ENCODE measurements at regions of chr1 and their contacts with region 1.

Region 1: GRCh38 chr1:86380257-86380861 is 15.8 kb downstream of the ODF2L start:
- DNase-seq: no peak
- H3K4me3 ChIP-seq: no peak overlapping the region
- H3K27ac ChIP-seq: no peak overlapping the region
- H3K4me1 ChIP-seq: peaks cover 0 to 21% (median 0%) of the 10 kb centered on the region in 4 donors
- H3K27me3 ChIP-seq: no peaks in the 10 kb centered on the region
- CTCF ChIP-seq: peak; percentile 62 to 76 (median 72)
- EP300 ChIP-seq: no peak
- POLR2A ChIP-seq: no peak

Region 2: GRCh38 chr1:86352096-86352495 is 28.3 kb before region 1 on chr1:
- intact Hi-C with region 1: no loop called
- DNase-seq: no peak
- H3K4me3 ChIP-seq: no peak overlapping the region
- H3K27ac ChIP-seq: no peak overlapping the region
- H3K4me1 ChIP-seq: no peaks in the 10 kb centered on the region
- H3K27me3 ChIP-seq: no peaks in the 10 kb centered on the region
- CTCF ChIP-seq: no peak
- EP300 ChIP-seq: no peak
- POLR2A ChIP-seq: no peak

Region 3: DNA sequence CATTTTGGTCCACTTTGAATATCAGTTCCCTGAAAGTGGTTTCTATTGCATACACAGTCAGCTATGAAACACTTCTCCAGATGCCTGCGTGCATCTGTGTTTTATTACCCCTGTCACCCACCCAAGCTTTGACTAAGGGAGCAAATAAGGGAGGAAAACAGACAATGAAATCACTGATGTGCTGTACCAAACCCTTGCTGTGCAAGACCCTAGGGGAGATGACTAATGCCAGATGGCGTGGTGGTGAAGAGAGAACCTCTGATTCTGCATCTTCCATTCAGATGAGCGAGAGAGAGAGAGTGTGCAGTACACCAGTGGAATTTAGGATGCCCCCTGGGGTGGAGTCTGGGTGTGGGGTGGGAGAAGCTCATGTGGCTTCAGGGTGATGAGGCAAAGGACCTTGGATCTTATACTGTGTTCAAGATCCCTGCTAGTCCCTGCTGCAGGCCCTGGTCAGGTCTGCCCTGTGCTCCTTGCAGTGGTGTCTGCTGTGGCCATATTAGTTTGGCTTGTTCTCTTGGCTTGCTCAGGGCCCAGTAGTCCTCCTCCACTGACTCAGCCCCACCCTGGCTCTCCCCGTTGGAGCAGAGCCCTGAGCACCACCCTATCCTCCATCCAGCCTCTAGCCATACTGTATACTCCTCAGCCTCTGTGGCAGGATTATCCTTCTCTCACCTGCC is 106.9 kb after region 1 on chr1:
- intact Hi-C with region 1: no loop called
- DNase-seq: peak; percentile 72
- H3K4me3 ChIP-seq: no peak overlapping the region
- H3K27ac ChIP-seq: peak overlapping the region in 3 of 4 donors; percentile 32 to 43 (median 42)
- H3K4me1 ChIP-seq: peaks cover 0 to 22% (median 8%) of the 10 kb centered on the region in 4 donors
- H3K27me3 ChIP-seq: no peaks in the 10 kb centered on the region
- CTCF ChIP-seq: no peak
- EP300 ChIP-seq: no peak
- POLR2A ChIP-seq: no peak

Region 4: DNA sequence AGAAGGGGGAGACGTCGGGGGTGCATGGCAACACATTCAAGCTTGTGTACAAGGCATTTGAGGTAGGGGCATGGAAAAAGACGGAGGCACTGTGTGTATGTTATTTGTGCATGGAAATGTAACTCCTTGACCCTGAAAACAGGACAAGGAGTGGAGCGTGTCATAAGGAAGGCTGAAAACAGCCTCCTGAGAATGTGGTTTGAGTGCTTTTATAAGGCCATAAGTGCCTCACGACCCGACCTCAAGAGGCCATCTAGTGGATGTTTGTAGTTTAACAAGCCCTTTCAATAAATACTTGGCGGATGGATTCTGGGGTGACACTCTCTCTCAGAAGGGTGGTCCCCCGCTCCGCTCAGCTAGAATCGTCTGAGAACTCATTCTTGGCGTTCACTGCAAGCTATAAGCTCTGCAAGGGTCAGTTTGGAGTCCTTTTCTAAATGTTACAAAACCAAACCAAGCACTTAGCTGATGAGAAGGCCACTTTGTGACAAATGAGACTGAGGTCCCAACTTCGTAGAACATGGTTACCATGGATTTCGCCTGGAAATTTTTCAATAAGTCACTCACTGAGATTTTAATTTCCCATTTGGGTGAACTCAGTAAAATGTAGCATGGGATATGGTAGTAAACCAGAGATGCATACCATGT is 127.7 kb after region 1 on chr1:
- intact Hi-C with region 1: loop called (anchors 2 kb)
- DNase-seq: peak; percentile 74
- H3K4me3 ChIP-seq: no peak overlapping the region
- H3K27ac ChIP-seq: peak overlapping the region in 2 of 4 donors; percentile 85 to 87
- H3K4me1 ChIP-seq: peaks cover 0 to 47% (median 40%) of the 10 kb centered on the region in 4 donors
- H3K27me3 ChIP-seq: no peaks in the 10 kb centered on the region
- CTCF ChIP-seq: peak in 3 of 4 experiments; percentile 39 to 64 (median 44)
- EP300 ChIP-seq: no peak
- POLR2A ChIP-seq: no peak

Region 5: GRCh38 chr1:86704458-86704971 is 324.2 kb after region 1 on chr1 and contains the start of gene SH3GLB1:
- intact Hi-C with region 1: no loop called
- DNase-seq: peak; percentile 92
- H3K4me3 ChIP-seq: peak within 1 kb of the TSS; percentile 71 to 93 (median 83)
- H3K27ac ChIP-seq: peak within 1 kb of the TSS; percentile 93 to 98 (median 98)
- H3K4me1 ChIP-seq: peaks cover 0 to 43% (median 39%) of the 10 kb centered on the region in 4 donors
- H3K27me3 ChIP-seq: no peaks in the 10 kb centered on the region
- CTCF ChIP-seq: peak; percentile 47 to 91 (median 77)
- EP300 ChIP-seq: no peak
- POLR2A ChIP-seq: peak; percentile 35 to 53
- total RNA-seq, gene SH3GLB1: 50.8 to 67.0 (median 56.7) TPM

Region 6: GRCh38 chr1:86913896-86914634 is 533.7 kb after region 1 on chr1 and contains the start of gene SELENOF:
- intact Hi-C with region 1: loop called (anchors 5 kb)
- DNase-seq: peak; percentile 99
- H3K4me3 ChIP-seq: peak within 1 kb of the TSS; percentile 78 to 98 (median 87)
- H3K27ac ChIP-seq: peak within 1 kb of the TSS; percentile 89 to 94 (median 91)
- H3K4me1 ChIP-seq: peaks cover 0 to 36% (median 19%) of the 10 kb centered on the region in 4 donors
- H3K27me3 ChIP-seq: no peaks in the 10 kb centered on the region
- CTCF ChIP-seq: no peak
- EP300 ChIP-seq: no peak
- POLR2A ChIP-seq: no peak
- total RNA-seq, gene SELENOF: 66.7 to 110 (median 84.1) TPM

Region 7: DNA sequence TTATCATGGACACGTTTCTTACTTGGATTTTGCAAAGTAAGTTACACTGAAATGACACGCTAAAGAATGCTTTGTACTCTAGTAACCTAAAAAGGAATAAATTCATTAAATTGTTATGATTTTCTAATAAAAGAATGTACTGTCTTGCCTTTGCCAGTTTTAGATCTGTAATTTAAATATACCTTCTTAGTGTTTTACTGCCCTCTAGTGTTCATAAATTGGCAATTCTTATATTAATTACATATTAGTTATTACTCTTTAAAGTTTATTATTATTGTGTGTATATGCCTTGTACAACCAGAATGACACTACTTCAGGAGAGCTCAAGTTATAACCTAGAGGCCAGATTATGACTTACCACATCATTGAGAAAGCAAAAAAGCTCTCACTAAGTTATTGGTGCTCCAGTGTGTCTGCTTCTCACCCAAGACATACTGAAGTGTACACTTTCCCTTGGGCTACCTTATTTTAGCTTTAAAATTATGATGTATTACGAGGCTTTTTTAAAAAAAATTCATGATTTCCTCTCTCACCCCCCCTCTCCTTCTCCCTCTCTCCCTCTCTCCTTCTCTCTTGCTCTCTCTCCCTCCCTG is 704.0 kb after region 1 on chr1:
- intact Hi-C with region 1: loop called (anchors 10 kb)
- DNase-seq: no peak
- H3K4me3 ChIP-seq: no peak overlapping the region
- H3K27ac ChIP-seq: no peak overlapping the region
- H3K4me1 ChIP-seq: peaks cover 0 to 4% (median 0%) of the 10 kb centered on the region in 4 donors
- H3K27me3 ChIP-seq: no peaks in the 10 kb centered on the region
- CTCF ChIP-seq: peak in 2 of 4 experiments; percentile 26 to 71
- EP300 ChIP-seq: no peak
- POLR2A ChIP-seq: no peak

Measured in sigmoid colon (tissue), 7 donors.